RWPE1 (cell line): ENCODE measurements at regions of chr17 and their contacts with region 1.

Region 1: DNA sequence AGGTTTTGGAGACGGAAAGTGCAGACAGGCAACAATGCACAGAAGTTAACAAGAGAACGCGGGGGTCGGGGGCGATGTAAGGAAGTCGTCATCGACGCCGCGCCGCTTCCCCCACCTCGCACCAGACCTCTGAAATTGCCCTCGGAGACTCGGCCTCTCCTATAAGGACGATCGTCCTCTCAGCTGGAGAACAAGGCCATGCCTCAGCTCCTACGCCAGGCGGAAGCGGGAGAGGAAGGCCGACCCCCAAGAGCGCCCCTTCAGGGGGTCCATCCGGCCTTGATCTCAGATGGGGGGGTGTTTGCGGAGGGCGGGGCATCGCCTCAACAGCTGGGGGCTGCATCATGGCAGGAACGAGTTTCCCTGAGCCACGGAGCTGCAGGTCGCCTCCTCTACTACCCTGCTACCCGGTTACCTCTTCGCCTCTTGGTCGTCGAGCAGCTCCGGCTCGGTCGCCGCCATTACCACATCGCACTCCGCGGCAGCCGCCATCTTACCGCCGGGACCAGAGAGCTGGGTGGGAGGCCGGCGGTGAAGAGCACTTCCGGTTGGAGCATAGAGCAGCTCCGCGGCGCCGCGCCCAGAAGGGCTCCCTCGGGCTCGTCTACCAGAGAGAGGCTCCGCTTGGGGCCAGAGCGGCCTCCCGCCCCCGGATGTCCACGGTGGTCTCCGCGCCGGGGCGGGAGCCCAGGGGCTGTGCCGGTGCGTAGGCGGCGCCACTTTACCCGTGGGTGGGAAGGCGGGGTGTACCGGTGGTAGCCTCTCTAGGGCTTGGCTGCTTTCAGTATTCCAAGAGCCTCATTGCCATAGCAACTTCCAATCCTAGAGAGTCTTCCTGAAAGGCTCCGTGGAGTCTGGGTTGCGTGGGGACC is at the start of gene DNAJC7:
- DNase-seq: peak; percentile 92
- H3K27ac ChIP-seq: peak within 1 kb of the TSS; percentile 91
- CTCF ChIP-seq: no peak

Region 2: DNA sequence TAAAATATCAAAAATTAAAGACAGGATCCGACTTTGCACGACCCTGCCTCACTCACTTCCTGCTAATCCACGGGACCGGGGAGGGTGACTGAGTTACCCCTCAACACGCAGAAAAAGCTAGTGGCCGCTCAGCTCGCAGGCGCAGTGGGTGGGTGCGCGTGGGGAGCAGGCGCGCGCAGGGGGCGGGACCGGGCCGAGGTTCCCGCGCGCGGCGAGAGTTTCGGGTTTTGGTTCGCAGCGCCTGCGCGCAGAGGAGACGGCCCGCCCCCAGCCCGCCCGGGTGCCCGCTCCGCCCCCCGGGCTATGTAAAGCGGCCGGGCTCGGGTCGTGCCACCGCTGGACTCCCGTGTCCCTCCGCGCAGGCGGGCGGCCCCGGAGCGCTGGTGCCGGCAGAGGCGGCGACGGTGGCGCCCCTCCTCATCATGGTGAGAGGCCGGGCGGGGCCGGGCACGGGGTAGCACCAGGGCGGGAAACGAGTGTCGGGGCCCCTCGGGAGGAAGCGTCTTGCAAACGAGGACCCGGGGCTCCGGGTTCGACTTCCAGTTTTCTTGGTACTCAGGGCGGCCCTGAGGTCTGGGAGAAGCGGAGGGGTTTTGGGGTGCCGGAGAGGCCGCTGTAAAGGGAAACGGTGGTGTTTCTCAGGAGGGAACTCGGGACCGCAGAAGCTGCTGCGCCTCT is 50.6 kb before region 1 on chr17 and contains the start of gene CNP:
- CTCF ChIA-PET with region 1: interaction called, 3 read pairs
- POLR2A ChIA-PET with region 1: interaction called, 11 read pairs
- DNase-seq: peak; percentile 92
- H3K27ac ChIP-seq: peak within 1 kb of the TSS; percentile 89
- CTCF ChIP-seq: no peak

Region 3: GRCh38 chr17:42153919-42154742 is 137.0 kb after region 1 on chr17:
- CTCF ChIA-PET with region 1: no interaction called
- POLR2A ChIA-PET with region 1: no interaction called
- DNase-seq: no peak
- H3K27ac ChIP-seq: peak overlapping the region; percentile 68
- CTCF ChIP-seq: no peak